HepG2 (cell line): ENCODE measurements at regions of chr5 and their contacts with region 1.

Region 1: DNA sequence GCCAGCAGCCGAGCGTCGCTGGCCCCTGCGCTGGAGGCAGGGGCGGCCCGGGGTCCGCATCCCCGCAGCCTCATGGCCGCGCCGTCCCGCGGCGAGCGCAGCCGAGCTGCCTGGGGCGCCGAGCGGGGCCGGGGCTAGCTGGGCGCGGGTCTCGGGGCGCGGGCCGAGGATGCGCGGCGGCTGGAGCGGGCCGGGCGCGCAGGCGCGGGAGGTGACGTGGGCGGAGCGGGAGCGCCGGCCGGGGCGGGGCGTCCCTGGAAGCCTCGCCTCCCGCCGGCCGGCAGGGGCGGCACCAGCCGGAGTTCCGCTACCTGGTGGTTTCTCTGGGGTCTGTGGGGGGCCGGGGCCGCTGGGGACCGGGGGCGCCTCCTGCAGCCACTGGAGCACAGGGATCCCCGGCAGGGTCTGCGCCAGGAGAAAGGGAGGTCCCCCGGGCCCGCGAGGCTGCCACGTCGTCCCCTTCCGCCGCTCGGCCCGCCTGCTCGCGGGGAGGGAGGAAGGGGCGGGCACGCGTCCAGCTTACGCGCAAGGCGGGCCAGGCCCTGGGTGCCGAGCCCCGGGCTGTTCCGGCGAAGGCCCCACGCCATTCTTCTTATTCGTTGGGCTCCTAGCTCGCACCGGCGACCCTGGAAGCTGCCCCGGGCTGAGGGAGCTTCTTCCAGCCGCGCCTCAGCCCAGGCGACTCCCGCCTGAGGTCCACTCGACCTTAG is at the start of gene LPCAT1:
- DNase-seq: peak; percentile 30
- ATAC-seq: peak; percentile 76
- H3K4me3 ChIP-seq: peak within 1 kb of the TSS; percentile 81 to 94 (median 90)
- H3K27ac ChIP-seq: peak within 1 kb of the TSS; percentile 66
- H3K4me1 ChIP-seq: peaks cover 54% of the 10 kb centered on the region
- H3K27me3 ChIP-seq: no peaks in the 10 kb centered on the region
- CTCF ChIP-seq: no peak; the same call in 1 of the 2 replicates
- EP300 ChIP-seq: no peak
- POLR2A ChIP-seq: no peak; a peak in 1 of 4 replicates
- RAD21 ChIP-seq: no peak
- total RNA-seq, gene LPCAT1: 16.0 and 29.8 TPM in 2 replicates

Region 2: GRCh38 chr5:1380011-1380817 is 143.7 kb before region 1 on chr5:
- CTCF ChIA-PET with region 1: no interaction called
- POLR2A ChIA-PET with region 1: no interaction called
- in situ Hi-C with region 1: no loop called
- intact Hi-C with region 1: no loop called
- DNase-seq: peak; percentile 37
- ATAC-seq: peak; percentile 96
- H3K4me3 ChIP-seq: peak overlapping the region in 1 of 3 experiments; percentile 22; a peak in 1 of 6 replicates
- H3K27ac ChIP-seq: no peak overlapping the region
- H3K4me1 ChIP-seq: peaks cover 12% of the 10 kb centered on the region
- H3K27me3 ChIP-seq: peaks cover 16 to 81% of the 10 kb centered on the region in 2 experiments
- CTCF ChIP-seq: peak; percentile 80
- EP300 ChIP-seq: no peak
- POLR2A ChIP-seq: no peak
- RAD21 ChIP-seq: peak; percentile 85

Region 3: DNA sequence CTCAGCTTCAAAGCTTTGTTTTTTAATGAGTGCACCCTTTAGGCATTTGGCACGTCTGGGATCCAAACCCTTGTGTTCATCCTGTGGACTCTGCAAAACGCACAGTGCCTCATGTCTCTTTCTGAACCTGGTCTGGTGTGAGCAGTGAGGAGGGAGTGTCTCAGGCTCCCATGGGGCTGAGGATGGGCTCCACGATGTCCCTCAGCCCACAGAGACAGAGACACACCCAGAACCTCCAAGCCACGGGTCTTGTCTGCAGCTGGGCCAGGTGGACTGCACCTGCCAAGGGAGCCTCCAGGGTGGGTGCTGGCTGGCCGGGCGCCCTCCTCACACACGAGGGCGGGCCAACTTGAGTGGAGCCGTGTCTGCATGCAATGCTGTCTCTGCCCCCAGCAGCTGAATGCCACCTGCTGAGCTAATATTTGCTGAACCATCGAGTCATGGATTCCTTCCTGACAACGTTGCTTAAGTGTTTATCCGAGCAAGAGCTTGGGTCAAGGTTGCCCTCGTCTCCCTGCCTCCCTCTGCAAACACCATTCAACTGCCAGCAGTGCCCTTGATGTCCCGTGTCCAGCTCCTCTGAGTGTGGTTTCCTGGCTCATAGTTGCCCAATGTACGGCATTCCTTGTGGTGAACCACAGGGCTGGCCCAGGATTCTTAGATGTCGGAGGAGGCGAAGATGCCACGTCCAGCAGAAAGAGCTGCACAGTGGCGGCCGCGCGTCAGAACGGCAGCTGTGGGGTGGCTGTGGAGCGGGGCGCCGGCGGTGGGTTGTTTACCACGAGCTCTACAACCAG is 31.3 kb after region 1 on chr5:
- CTCF ChIA-PET with region 1: no interaction called
- POLR2A ChIA-PET with region 1: interaction called, 14 read pairs
- in situ Hi-C with region 1: loop called (anchors 5 kb)
- intact Hi-C with region 1: no loop called
- DNase-seq: peak; percentile 96
- ATAC-seq: peak; percentile 85
- H3K4me3 ChIP-seq: peak overlapping the region in 1 of 3 experiments; percentile 32; a peak in 2 of 6 replicates
- H3K27ac ChIP-seq: peak overlapping the region; percentile 60
- H3K4me1 ChIP-seq: peaks cover 59% of the 10 kb centered on the region
- H3K27me3 ChIP-seq: no peaks in the 10 kb centered on the region
- CTCF ChIP-seq: peak; percentile 39
- EP300 ChIP-seq: peak; percentile 87 to 98
- POLR2A ChIP-seq: peak in 1 of 2 experiments; percentile 44; a peak in 1 of 4 replicates
- RAD21 ChIP-seq: no peak

Region 4: GRCh38 chr5:1568201-1568979 is 44.5 kb after region 1 on chr5:
- CTCF ChIA-PET with region 1: no interaction called
- POLR2A ChIA-PET with region 1: interaction called, 11 read pairs
- in situ Hi-C with region 1: loop called (anchors 5 kb)
- intact Hi-C with region 1: loop called (anchors 1 kb)
- DNase-seq: peak; percentile 95
- ATAC-seq: peak; percentile 42
- H3K4me3 ChIP-seq: peak overlapping the region in 1 of 3 experiments; percentile 36; a peak in 2 of 6 replicates
- H3K27ac ChIP-seq: peak overlapping the region; percentile 93
- H3K4me1 ChIP-seq: peaks cover 65% of the 10 kb centered on the region
- H3K27me3 ChIP-seq: no peaks in the 10 kb centered on the region
- CTCF ChIP-seq: no peak
- EP300 ChIP-seq: no peak
- POLR2A ChIP-seq: no peak
- RAD21 ChIP-seq: no peak